ENCODE measurements at regions of chr15 and their contacts with region 1.

Region 1: GRCh38 chr15:34987985-34988873 is at the start of gene ZNF770:
- DNase-seq: peak; percentile 59 to 94 (median 80)
- ATAC-seq: peak; percentile 84
- H3K4me3 ChIP-seq: peak within 1 kb of the TSS; percentile 89
- H3K4me3 Mint-ChIP-seq: peak within 1 kb of the TSS; percentile 99
- H3K27ac ChIP-seq: peak within 1 kb of the TSS; percentile 93 to 98
- H3K27ac Mint-ChIP-seq: peak within 1 kb of the TSS; percentile 98
- H3K4me1 ChIP-seq: peaks cover 23% of the 10 kb centered on the region
- H3K4me1 Mint-ChIP-seq: peaks cover 55% of the 10 kb centered on the region
- H3K27me3 ChIP-seq: no peaks in the 10 kb centered on the region
- H3K27me3 Mint-ChIP-seq: no peaks in the 10 kb centered on the region
- CTCF ChIP-seq: no peak
- total RNA-seq, gene ZNF770: 35.4 to 37.9 TPM

Region 2: GRCh38 chr15:34038023-34038870 is 950.0 kb before region 1 on chr15:
- CTCF ChIA-PET with region 1: no interaction called
- POLR2A ChIA-PET with region 1: interaction called, 13 read pairs
- intact Hi-C with region 1: loop called in 1 of 2 experiments (anchors 5 kb)
- DNase-seq: peak; percentile 51 to 91 (median 68)
- ATAC-seq: peak; percentile 81
- H3K4me3 ChIP-seq: peak overlapping the region; percentile 76
- H3K4me3 Mint-ChIP-seq: peak overlapping the region; percentile 91
- H3K27ac ChIP-seq: peak overlapping the region; percentile 55 to 57
- H3K27ac Mint-ChIP-seq: peak overlapping the region; percentile 90
- H3K4me1 ChIP-seq: peaks cover 7% of the 10 kb centered on the region
- H3K4me1 Mint-ChIP-seq: peaks cover 20% of the 10 kb centered on the region
- H3K27me3 ChIP-seq: no peaks in the 10 kb centered on the region
- H3K27me3 Mint-ChIP-seq: no peaks in the 10 kb centered on the region
- CTCF ChIP-seq: no peak

Region 3: DNA sequence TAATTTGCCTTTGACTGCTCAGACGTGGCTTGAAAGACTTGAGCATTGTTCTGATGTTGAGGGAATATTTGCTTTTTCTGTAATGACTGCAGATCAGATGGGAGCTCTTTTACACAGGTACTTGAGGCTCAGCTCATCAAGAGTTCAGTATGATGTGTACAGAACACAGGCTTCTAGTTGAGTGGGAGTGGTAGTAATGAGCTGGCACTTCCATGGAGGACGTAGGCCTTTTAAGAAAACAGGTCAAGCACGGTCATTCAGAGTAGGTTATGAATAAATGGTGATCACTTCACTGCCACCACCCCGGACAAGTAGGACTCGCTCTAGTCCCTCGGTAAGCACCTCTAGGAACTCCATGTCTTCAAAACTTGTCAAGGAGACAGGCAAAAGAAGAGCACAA is 754.6 kb before region 1 on chr15:
- CTCF ChIA-PET with region 1: no interaction called
- POLR2A ChIA-PET with region 1: no interaction called
- intact Hi-C with region 1: loop called in 1 of 2 experiments (anchors 5 kb)
- DNase-seq: no peak
- ATAC-seq: no peak
- H3K4me3 ChIP-seq: no peak overlapping the region
- H3K4me3 Mint-ChIP-seq: no peak overlapping the region
- H3K27ac ChIP-seq: no peak overlapping the region
- H3K27ac Mint-ChIP-seq: no peak overlapping the region
- H3K4me1 ChIP-seq: no peaks in the 10 kb centered on the region
- H3K4me1 Mint-ChIP-seq: no peaks in the 10 kb centered on the region
- H3K27me3 ChIP-seq: no peaks in the 10 kb centered on the region
- H3K27me3 Mint-ChIP-seq: no peaks in the 10 kb centered on the region
- CTCF ChIP-seq: no peak

Region 4: GRCh38 chr15:34969340-34970097 is 18.7 kb before region 1 on chr15 and contains the start of gene AQR:
- CTCF ChIA-PET with region 1: interaction called, 60 read pairs
- POLR2A ChIA-PET with region 1: interaction called, 166 read pairs
- intact Hi-C with region 1: loop called (anchors 1 kb)
- DNase-seq: peak; percentile 83 to 98 (median 88)
- ATAC-seq: peak; percentile 96
- H3K4me3 ChIP-seq: peak within 1 kb of the TSS; percentile 99
- H3K4me3 Mint-ChIP-seq: peak within 1 kb of the TSS; percentile 98
- H3K27ac ChIP-seq: peak within 1 kb of the TSS; percentile 71 to 83
- H3K27ac Mint-ChIP-seq: peak within 1 kb of the TSS; percentile 92
- H3K4me1 ChIP-seq: peaks cover 30% of the 10 kb centered on the region
- H3K4me1 Mint-ChIP-seq: peaks cover 58% of the 10 kb centered on the region
- H3K27me3 ChIP-seq: no peaks in the 10 kb centered on the region
- H3K27me3 Mint-ChIP-seq: no peaks in the 10 kb centered on the region
- CTCF ChIP-seq: peak; percentile 82
- total RNA-seq, gene AQR: 40.4 to 40.7 TPM

Region 5: GRCh38 chr15:35545824-35546510 is 557.7 kb after region 1 on chr15 and contains the start of gene DPH6:
- CTCF ChIA-PET with region 1: no interaction called
- POLR2A ChIA-PET with region 1: no interaction called
- intact Hi-C with region 1: loop called in 1 of 2 experiments (anchors 5 kb)
- DNase-seq: peak; percentile 56 to 92 (median 76)
- ATAC-seq: peak; percentile 82
- H3K4me3 ChIP-seq: peak within 1 kb of the TSS; percentile 78
- H3K4me3 Mint-ChIP-seq: peak within 1 kb of the TSS; percentile 93
- H3K27ac ChIP-seq: peak within 1 kb of the TSS; percentile 79 to 94
- H3K27ac Mint-ChIP-seq: peak within 1 kb of the TSS; percentile 96
- H3K4me1 ChIP-seq: peaks cover 16% of the 10 kb centered on the region
- H3K4me1 Mint-ChIP-seq: peaks cover 32% of the 10 kb centered on the region
- H3K27me3 ChIP-seq: no peaks in the 10 kb centered on the region
- H3K27me3 Mint-ChIP-seq: no peaks in the 10 kb centered on the region
- CTCF ChIP-seq: no peak
- total RNA-seq, gene DPH6: 7.0 to 8.0 TPM